Activated CD4-positive, alpha-beta memory T cell treated with anti-CD3 and anti-CD28 coated beads for 36 hours (primary cell): ENCODE measurements at regions of chr10 and their contacts with region 1.

Region 1: GRCh38 chr10:70233109-70233938 is at the start of gene PPA1:
- DNase-seq: peak; percentile 99
- H3K4me3 Mint-ChIP-seq: peak within 1 kb of the TSS; percentile 85
- H3K27ac Mint-ChIP-seq: peak within 1 kb of the TSS; percentile 97
- H3K4me1 Mint-ChIP-seq: peaks cover 30% of the 10 kb centered on the region
- H3K27me3 Mint-ChIP-seq: peaks cover 2% of the 10 kb centered on the region
- total RNA-seq, gene PPA1: 359 to 368 TPM

Region 2: DNA sequence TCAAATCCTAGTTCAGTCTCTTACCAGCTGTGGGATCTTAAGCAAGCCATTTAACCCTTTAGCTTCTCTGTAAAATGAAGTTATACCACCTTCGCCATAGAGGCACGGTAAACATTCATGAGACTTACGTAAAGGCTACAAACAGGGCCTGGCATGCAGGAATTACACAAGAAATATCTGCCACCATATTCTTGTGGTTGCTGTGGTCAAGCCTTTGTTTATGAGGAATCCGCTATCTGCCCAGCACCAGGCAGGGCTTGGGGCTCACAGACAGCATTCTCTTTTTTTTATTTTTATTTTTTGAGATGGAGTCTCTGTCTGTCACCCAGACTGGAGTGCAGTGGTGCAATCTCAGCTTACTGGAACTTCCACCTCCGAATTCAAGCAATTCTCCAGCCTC is 110.6 kb before region 1 on chr10:
- CTCF ChIA-PET with region 1: no interaction called
- POLR2A ChIA-PET with region 1: no interaction called
- intact Hi-C with region 1: no loop called
- DNase-seq: no peak
- H3K4me3 Mint-ChIP-seq: no peak overlapping the region
- H3K27ac Mint-ChIP-seq: no peak overlapping the region
- H3K4me1 Mint-ChIP-seq: no peaks in the 10 kb centered on the region
- H3K27me3 Mint-ChIP-seq: no peaks in the 10 kb centered on the region

Region 3: GRCh38 chr10:70169649-70170364 is 63.5 kb before region 1 on chr10:
- CTCF ChIA-PET with region 1: interaction called, 3 read pairs
- POLR2A ChIA-PET with region 1: interaction called, 6 read pairs
- intact Hi-C with region 1: loop called (anchors 1 kb)
- DNase-seq: peak; percentile 15
- H3K4me3 Mint-ChIP-seq: peak overlapping the region; percentile 93
- H3K27ac Mint-ChIP-seq: peak overlapping the region; percentile 94
- H3K4me1 Mint-ChIP-seq: peaks cover 68% of the 10 kb centered on the region
- H3K27me3 Mint-ChIP-seq: no peaks in the 10 kb centered on the region

Region 4: DNA sequence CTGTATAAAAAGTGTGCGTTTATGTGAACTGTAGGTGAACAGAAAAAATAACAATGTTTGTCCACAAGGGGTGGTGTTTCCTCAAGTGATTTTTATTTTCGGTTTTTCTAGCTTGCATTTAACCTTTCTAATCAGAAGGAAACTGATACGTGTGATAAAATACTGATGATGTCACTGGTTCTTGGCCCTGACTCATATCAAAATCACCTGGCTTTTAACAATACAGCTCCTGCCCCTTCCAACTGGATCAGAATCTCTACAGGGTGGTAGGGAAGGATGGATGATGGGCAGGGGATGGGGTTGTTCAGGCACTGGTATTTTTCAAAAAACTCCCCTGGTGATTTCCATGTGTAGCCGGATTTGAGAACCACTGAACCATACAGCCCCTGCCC is 39.6 kb after region 1 on chr10:
- CTCF ChIA-PET with region 1: interaction called, 18 read pairs
- POLR2A ChIA-PET with region 1: interaction called, 4 read pairs
- intact Hi-C with region 1: loop called (anchors 1 kb)
- DNase-seq: peak; percentile 24
- H3K4me3 Mint-ChIP-seq: no peak overlapping the region
- H3K27ac Mint-ChIP-seq: peak overlapping the region; percentile 56
- H3K4me1 Mint-ChIP-seq: peaks cover 26% of the 10 kb centered on the region
- H3K27me3 Mint-ChIP-seq: no peaks in the 10 kb centered on the region

Region 5: GRCh38 chr10:70381471-70382421 is 148.4 kb after region 1 on chr10:
- CTCF ChIA-PET with region 1: interaction called, 3 read pairs
- POLR2A ChIA-PET with region 1: no interaction called
- intact Hi-C with region 1: loop called (anchors 5 kb)
- DNase-seq: peak; percentile 48
- H3K4me3 Mint-ChIP-seq: peak overlapping the region; percentile 77
- H3K27ac Mint-ChIP-seq: no peak overlapping the region
- H3K4me1 Mint-ChIP-seq: no peaks in the 10 kb centered on the region
- H3K27me3 Mint-ChIP-seq: no peaks in the 10 kb centered on the region